Activated CD4-positive, alpha-beta memory T cell treated with anti-CD3 and anti-CD28 coated beads for 36 hours (primary cell): ENCODE measurements at regions of chr6 and their contacts with region 1.

Region 1: GRCh38 chr6:108446629-108447150 is 114.0 kb upstream of the FOXO3 start:
- DNase-seq: no peak
- H3K4me3 Mint-ChIP-seq: no peak overlapping the region
- H3K27ac Mint-ChIP-seq: no peak overlapping the region
- H3K4me1 Mint-ChIP-seq: peaks cover 16% of the 10 kb centered on the region
- H3K27me3 Mint-ChIP-seq: peaks cover 16% of the 10 kb centered on the region

Region 2: GRCh38 chr6:107964671-107965340 is 481.9 kb before region 1 on chr6:
- CTCF ChIA-PET with region 1: no interaction called
- POLR2A ChIA-PET with region 1: no interaction called
- intact Hi-C with region 1: loop called (anchors 1 kb)
- DNase-seq: peak; percentile 88
- H3K4me3 Mint-ChIP-seq: no peak overlapping the region
- H3K27ac Mint-ChIP-seq: peak overlapping the region; percentile 95
- H3K4me1 Mint-ChIP-seq: peaks cover 20% of the 10 kb centered on the region
- H3K27me3 Mint-ChIP-seq: no peaks in the 10 kb centered on the region

Region 3: DNA sequence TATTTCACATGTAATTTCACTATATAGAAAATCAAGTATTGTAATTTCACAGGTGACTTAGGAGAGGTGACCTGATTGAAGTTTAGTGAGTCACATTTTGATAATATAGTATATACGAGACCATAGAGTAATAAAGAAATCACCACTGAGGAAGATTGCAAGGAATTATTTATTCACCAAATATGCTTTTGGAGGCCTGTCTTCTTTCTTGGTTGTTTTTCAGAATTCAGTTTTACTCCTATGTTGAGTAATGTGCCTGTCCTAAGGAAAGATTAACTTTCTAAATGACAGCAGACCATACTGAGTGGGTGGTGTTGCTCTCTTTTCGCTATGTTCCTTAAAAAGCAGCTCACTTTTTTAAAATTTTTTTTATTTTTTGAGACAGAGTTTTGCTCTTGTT is 26.5 kb after region 1 on chr6:
- CTCF ChIA-PET with region 1: no interaction called
- POLR2A ChIA-PET with region 1: no interaction called
- intact Hi-C with region 1: loop called (anchors 1 kb)
- DNase-seq: no peak
- H3K4me3 Mint-ChIP-seq: no peak overlapping the region
- H3K27ac Mint-ChIP-seq: no peak overlapping the region
- H3K4me1 Mint-ChIP-seq: peaks cover 3% of the 10 kb centered on the region
- H3K27me3 Mint-ChIP-seq: peaks cover 11% of the 10 kb centered on the region

Region 4: GRCh38 chr6:108526739-108527174 is 80.1 kb after region 1 on chr6:
- CTCF ChIA-PET with region 1: no interaction called
- POLR2A ChIA-PET with region 1: no interaction called
- intact Hi-C with region 1: no loop called
- DNase-seq: no peak
- H3K4me3 Mint-ChIP-seq: no peak overlapping the region
- H3K27ac Mint-ChIP-seq: no peak overlapping the region
- H3K4me1 Mint-ChIP-seq: no peaks in the 10 kb centered on the region
- H3K27me3 Mint-ChIP-seq: no peaks in the 10 kb centered on the region